T-cell (primary cell): ENCODE measurements at regions of chr13 and their contacts with region 1.

Region 1: DNA sequence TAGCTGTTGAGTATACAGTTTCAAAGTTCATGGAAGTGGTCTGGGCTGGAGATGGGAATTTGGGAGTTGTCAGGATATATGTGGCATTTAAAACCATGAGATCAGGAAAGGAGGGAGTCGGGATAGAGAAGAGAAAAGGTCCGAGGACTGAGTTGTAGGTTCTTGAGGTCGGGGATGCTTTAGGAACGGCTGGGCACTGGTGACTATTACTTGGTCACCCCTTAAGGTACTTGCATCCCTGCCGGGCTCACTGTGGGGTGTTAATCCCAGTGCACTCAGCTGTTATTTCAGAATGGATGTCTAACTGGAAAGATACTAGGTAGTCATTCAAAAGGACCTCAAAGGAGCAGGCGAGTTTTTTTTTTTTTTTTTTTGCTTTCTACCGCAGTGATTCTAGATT is 34.2 kb downstream of the WASF3 start:
- DNase-seq: no peak
- ATAC-seq: no peak
- H3K4me3 ChIP-seq: no peak overlapping the region
- H3K4me3 Mint-ChIP-seq: no peak overlapping the region
- H3K27ac ChIP-seq: no peak overlapping the region
- H3K27ac Mint-ChIP-seq: no peak overlapping the region
- H3K4me1 ChIP-seq: no peaks in the 10 kb centered on the region
- H3K4me1 Mint-ChIP-seq: no peaks in the 10 kb centered on the region
- H3K27me3 ChIP-seq: no peaks in the 10 kb centered on the region
- H3K27me3 Mint-ChIP-seq: peaks cover 15 to 40% of the 10 kb centered on the region in 2 donors

Region 2: GRCh38 chr13:26551255-26551860 is 40.3 kb before region 1 on chr13:
- CTCF ChIA-PET with region 1: no interaction called
- POLR2A ChIA-PET with region 1: interaction called in 1 of 2 experiments, 13 read pairs
- DNase-seq: no peak
- ATAC-seq: no peak
- H3K4me3 ChIP-seq: no peak overlapping the region
- H3K4me3 Mint-ChIP-seq: no peak overlapping the region
- H3K27ac ChIP-seq: no peak overlapping the region
- H3K27ac Mint-ChIP-seq: no peak overlapping the region
- H3K4me1 ChIP-seq: no peaks in the 10 kb centered on the region
- H3K4me1 Mint-ChIP-seq: no peaks in the 10 kb centered on the region
- H3K27me3 ChIP-seq: peaks cover 6 to 7% of the 10 kb centered on the region in 2 experiments
- H3K27me3 Mint-ChIP-seq: peaks cover 22 to 34% of the 10 kb centered on the region in 2 donors

Region 3: DNA sequence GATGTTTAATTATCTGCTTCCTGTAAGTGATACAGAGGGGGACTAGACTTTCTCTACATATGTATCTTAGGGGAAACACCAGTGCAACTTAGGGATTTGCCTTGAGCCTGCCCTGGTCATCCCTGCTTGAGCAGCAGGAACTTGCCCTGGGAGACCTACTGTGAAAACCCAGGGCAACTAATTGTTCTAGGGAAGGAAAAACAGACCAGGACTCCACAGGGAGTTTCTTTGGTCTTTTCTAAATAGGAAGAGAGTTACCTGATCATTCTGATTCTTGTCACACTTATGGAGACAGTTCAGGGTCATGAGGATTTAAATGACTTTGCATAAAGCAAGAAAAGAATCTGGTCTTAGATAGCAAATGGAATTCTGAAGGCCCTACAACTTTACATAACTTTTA is 54.9 kb after region 1 on chr13:
- CTCF ChIA-PET with region 1: no interaction called
- POLR2A ChIA-PET with region 1: no interaction called
- DNase-seq: no peak
- ATAC-seq: no peak
- H3K4me3 ChIP-seq: no peak overlapping the region
- H3K4me3 Mint-ChIP-seq: no peak overlapping the region
- H3K27ac ChIP-seq: no peak overlapping the region
- H3K27ac Mint-ChIP-seq: no peak overlapping the region
- H3K4me1 ChIP-seq: no peaks in the 10 kb centered on the region
- H3K4me1 Mint-ChIP-seq: no peaks in the 10 kb centered on the region
- H3K27me3 ChIP-seq: peaks cover 0 to 11% of the 10 kb centered on the region in 2 experiments
- H3K27me3 Mint-ChIP-seq: peaks cover 18 to 27% of the 10 kb centered on the region in 2 donors